PC-9 (cell line): ENCODE measurements at regions of chr16 and their contacts with region 1.

Region 1: DNA sequence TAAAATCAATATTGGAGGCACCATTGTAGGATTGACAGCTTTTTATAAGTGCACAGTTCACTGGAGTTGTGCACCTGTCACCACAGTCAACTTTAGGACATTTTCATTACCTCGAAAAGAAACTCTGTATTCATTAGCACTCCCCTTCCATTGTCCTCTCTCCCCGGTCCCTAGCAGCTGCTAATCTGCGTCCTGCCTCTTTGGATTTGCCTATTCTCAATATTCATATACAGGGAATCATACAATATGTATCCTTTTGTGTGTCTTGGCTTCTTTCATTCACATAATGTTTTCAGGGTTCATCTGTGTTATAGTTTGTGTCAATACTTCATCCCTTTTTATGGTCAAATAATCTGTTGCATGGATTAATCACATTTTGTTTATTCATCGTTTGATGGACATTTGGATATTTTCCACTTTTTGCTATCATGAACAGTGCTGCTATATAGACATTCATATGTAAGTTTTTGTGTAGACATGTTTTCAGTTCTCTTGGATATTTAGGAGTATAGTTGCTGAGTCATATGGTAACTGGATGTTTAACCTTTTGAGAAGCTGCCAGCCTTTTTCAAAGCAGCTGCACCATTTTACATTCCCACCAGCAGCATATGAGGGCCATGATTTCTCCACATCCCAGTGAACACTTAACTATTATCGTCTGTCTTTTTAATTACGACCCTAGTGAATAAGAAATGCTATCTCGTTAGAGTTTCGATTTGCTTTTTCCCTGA is 9.8 kb downstream of the DNAJA3 start:
- DNase-seq: no peak
- H3K4me3 ChIP-seq: no peak overlapping the region
- H3K27ac ChIP-seq: no peak overlapping the region
- H3K4me1 ChIP-seq: no peaks in the 10 kb centered on the region
- H3K27me3 ChIP-seq: no peaks in the 10 kb centered on the region
- CTCF ChIP-seq: no peak

Region 2: DNA sequence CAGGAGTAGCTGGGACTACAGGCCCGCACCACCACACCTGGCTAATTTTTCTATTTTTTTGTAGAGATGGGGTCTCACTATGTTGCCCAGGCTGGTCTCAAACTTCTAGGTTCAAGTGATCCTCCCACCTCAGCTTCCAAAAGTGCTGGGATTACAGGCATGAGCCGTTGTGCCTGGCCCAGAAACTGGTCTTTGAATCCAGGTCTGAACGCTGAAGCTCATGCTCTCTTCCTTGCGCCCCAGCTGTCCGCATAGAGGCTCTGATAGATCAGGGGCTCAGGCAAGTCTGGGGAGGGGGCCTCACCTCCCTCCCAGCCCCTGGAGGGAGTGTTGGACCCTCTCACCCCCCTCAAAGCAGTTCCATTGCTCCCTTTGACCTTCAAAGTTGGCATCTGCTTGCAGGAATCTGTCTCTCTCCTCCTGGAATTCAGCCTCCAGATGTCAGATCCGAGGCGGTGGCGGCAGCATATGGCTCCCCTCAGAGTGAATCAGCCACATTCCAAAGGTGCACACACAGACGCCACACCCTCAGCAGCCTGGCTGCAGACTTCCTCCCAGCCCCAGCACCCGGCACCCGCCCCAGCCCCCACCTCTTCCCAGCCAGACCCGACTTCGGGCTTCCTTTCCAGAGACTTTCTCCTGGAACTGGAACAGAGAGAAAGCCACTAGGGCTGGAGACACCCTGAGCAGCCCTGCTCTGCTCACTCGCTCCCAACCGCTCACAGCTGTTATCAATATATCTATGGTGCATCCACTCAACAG is 136.6 kb before region 1 on chr16:
- CTCF ChIA-PET with region 1: interaction called, 10 read pairs
- POLR2A ChIA-PET with region 1: no interaction called
- intact Hi-C with region 1: no loop called
- DNase-seq: peak; percentile 91 to 96
- H3K4me3 ChIP-seq: peak overlapping the region; percentile 15; the same call in 1 of the 2 replicates
- H3K27ac ChIP-seq: peak overlapping the region; percentile 73
- H3K4me1 ChIP-seq: peaks cover 33% of the 10 kb centered on the region
- H3K27me3 ChIP-seq: no peaks in the 10 kb centered on the region
- CTCF ChIP-seq: no peak

Region 3: GRCh38 chr16:4780235-4780634 is 344.7 kb after region 1 on chr16:
- CTCF ChIA-PET with region 1: no interaction called
- POLR2A ChIA-PET with region 1: no interaction called
- intact Hi-C with region 1: no loop called
- DNase-seq: no peak
- H3K4me3 ChIP-seq: no peak overlapping the region
- H3K27ac ChIP-seq: no peak overlapping the region
- H3K4me1 ChIP-seq: no peaks in the 10 kb centered on the region; the same call in 1 of the 2 replicates
- H3K27me3 ChIP-seq: no peaks in the 10 kb centered on the region
- CTCF ChIP-seq: no peak